PC-3 (cell line): ENCODE measurements at regions of chr1 and their contacts with region 1.

Region 1: GRCh38 chr1:84506002-84506728 is at the starts of genes GNG5 and SPATA1:
- DNase-seq: peak; percentile 96
- ATAC-seq: peak; percentile 81
- H3K4me3 ChIP-seq: peak within 1 kb of the TSS; percentile 83
- H3K27ac ChIP-seq: peak within 1 kb of the TSS; percentile 94
- H3K4me1 ChIP-seq: peaks cover 26% of the 10 kb centered on the region
- H3K27me3 ChIP-seq: no peaks in the 10 kb centered on the region
- CTCF ChIP-seq: no peak
- total RNA-seq, gene GNG5: 39.9 and 49.9 TPM in 2 replicates
- total RNA-seq, gene SPATA1: 2.9 TPM in 1 of 2 replicates, not detected in the other

Region 2: DNA sequence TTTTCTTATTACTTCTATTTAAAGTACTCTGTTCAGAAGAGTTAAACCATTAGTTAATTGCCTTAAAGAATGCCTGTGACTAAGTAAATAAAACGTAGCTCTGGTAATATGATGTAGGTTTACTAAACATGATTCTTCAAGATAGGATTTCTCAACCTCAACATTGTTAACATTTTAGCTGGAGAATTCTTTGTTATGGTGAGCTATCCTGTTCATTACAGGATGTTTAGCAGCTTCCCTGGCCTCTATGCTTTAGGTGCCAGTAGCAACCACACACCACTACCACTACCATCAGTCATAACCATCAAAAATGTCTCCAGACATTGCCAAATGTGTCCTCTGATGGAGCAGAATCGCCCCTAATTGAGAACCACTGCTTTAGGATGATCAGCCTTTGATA is 16.4 kb before region 1 on chr1:
- CTCF ChIA-PET with region 1: no interaction called
- POLR2A ChIA-PET with region 1: interaction called, 15 read pairs
- intact Hi-C with region 1: no loop called
- DNase-seq: no peak
- ATAC-seq: no peak
- H3K4me3 ChIP-seq: no peak overlapping the region
- H3K27ac ChIP-seq: no peak overlapping the region
- H3K4me1 ChIP-seq: peaks cover 16% of the 10 kb centered on the region
- H3K27me3 ChIP-seq: no peaks in the 10 kb centered on the region
- CTCF ChIP-seq: no peak

Region 3: DNA sequence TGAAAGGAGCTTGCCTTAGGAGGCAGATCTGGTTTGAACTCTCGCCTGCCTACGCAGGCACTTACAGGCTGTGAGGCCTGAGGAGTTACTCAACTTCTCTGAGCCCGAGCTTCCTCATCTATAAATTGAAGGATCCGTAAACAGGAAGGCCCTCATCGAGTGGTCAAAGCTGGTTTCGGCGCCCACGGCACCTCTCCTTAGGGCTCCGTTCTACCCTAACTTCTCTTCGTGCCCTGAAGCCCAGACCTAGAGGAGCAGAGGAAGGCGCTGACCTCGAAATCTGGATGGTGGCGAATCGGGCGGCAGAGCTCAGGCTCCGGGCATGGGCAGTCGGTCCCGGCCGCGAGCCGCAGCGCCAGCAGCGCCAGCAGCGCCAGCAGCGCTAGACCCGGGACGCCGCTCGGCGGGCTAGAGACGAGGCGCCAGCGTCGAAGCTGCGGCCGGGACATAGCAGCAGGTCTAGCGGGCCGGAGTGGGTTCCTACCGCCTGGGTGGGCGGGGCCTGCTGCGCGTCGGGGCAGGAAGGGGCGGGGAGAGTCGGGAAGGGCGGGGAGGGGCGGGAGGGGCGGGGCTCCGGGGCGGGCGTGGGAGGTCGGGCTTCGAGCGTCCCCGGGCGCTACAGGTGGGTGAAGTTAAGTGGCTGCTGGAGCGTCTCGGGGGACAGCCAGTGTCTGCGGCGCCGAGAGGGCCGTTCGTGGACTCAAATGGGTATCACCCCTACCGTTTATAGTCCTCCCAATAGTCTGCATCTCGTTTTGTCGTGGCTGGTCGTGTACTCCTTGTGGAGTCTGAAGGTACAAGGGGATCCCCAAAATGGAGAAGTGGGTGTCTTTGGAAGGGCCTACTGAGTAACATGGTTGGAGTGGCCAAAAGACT is 68.0 kb after region 1 on chr1 and contains the start of gene CTBS:
- CTCF ChIA-PET with region 1: no interaction called
- POLR2A ChIA-PET with region 1: interaction called, 4 read pairs
- intact Hi-C with region 1: loop called (anchors 1 kb)
- DNase-seq: peak; percentile 80
- ATAC-seq: peak; percentile 88
- H3K4me3 ChIP-seq: peak within 1 kb of the TSS; percentile 94
- H3K27ac ChIP-seq: peak within 1 kb of the TSS; percentile 97
- H3K4me1 ChIP-seq: peaks cover 39% of the 10 kb centered on the region
- H3K27me3 ChIP-seq: no peaks in the 10 kb centered on the region
- CTCF ChIP-seq: no peak
- total RNA-seq, gene CTBS: 3.7 and 5.9 TPM in 2 replicates

Region 4: DNA sequence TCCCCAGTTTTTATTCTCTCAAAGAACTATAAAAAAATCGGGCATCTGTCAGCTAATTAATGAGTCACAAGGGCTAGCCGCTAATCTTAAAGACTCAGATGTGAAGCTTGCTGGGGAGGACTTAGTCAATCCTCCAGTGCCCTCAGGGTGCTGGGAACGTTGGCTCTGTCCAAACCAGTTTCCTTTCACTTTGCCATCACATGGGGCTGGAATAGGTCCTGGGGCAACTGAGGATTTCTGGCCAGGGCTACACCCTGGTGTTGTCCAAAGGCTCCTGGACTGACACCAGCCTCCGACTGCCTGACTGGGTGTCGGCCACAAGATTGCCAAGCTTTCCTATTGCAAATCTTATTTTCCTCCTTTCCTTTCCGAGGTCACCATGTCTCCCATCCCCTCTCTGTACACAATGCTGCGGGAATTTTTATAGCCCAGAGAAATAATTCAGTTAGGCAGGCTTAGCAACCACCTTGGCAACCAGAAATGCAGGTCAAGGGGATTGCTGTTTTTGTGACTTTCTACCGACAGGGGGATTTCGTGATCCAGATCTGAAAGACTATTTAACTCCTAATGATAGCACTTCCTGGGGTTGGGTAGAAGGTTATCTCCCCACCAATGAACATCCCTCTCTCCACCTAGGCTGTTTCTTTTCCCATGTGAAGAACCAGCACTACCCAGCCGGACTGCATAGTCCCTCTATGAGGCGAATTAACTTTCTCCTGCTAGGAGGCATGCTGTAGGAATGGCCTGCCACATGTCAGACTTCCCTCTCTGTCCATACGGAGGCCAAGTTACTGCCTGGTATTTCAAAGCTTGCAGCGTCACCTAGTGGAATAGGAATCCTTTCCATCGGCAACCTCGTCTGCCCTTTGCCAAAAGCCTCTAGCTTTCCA is 98.0 kb after region 1 on chr1:
- CTCF ChIA-PET with region 1: interaction called, 3 read pairs
- POLR2A ChIA-PET with region 1: interaction called, 4 read pairs
- intact Hi-C with region 1: loop called (anchors 1 kb)
- DNase-seq: peak; percentile 97
- ATAC-seq: peak; percentile 77
- H3K4me3 ChIP-seq: peak overlapping the region; percentile 63
- H3K27ac ChIP-seq: peak overlapping the region; percentile 92
- H3K4me1 ChIP-seq: peaks cover 27% of the 10 kb centered on the region
- H3K27me3 ChIP-seq: no peaks in the 10 kb centered on the region
- CTCF ChIP-seq: peak; percentile 88

Region 5: GRCh38 chr1:84753516-84754385 is 247.6 kb after region 1 on chr1:
- CTCF ChIA-PET with region 1: no interaction called
- POLR2A ChIA-PET with region 1: no interaction called
- intact Hi-C with region 1: loop called (anchors 10 kb)
- DNase-seq: peak; percentile 82
- ATAC-seq: peak; percentile 89
- H3K4me3 ChIP-seq: no peak overlapping the region
- H3K27ac ChIP-seq: no peak overlapping the region
- H3K4me1 ChIP-seq: 0 out of 2 replicates have a peak, but pooled peaks cover 4% of the 10 kb centered on the region
- H3K27me3 ChIP-seq: no peaks in the 10 kb centered on the region
- CTCF ChIP-seq: peak; percentile 97